ENCODE measurements at regions of chr9 and their contacts with region 1.

Region 1: GRCh38 chr9:112361601-112362000 is 18.3 kb upstream of the HSDL2 start:
- DNase-seq: peak; percentile 62

Region 2: DNA sequence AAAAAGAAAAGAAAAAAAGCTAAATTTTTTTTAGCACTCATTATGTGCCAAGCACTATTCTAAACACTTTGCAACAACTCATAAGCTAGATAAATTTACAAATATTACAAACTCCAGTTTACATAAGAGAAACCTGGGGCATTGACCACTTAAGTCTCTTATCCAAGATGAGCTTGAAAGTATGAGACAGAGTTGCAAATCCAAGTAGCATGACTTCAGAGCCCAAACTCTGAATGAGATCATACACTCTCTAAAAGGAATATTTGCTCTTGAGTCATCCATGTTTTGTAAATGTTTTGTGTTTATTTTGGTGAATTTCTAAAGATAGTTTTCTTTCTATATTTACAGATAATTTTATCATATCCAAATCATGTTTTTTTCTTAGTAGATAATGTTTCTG is 562.8 kb before region 1 on chr9:
- in situ Hi-C with region 1: loop called (anchors 25 kb)
- DNase-seq: no peak

Measured in KBM-7 (cell line).